ENCODE measurements at regions of chr10 and their contacts with region 1.

Region 1: DNA sequence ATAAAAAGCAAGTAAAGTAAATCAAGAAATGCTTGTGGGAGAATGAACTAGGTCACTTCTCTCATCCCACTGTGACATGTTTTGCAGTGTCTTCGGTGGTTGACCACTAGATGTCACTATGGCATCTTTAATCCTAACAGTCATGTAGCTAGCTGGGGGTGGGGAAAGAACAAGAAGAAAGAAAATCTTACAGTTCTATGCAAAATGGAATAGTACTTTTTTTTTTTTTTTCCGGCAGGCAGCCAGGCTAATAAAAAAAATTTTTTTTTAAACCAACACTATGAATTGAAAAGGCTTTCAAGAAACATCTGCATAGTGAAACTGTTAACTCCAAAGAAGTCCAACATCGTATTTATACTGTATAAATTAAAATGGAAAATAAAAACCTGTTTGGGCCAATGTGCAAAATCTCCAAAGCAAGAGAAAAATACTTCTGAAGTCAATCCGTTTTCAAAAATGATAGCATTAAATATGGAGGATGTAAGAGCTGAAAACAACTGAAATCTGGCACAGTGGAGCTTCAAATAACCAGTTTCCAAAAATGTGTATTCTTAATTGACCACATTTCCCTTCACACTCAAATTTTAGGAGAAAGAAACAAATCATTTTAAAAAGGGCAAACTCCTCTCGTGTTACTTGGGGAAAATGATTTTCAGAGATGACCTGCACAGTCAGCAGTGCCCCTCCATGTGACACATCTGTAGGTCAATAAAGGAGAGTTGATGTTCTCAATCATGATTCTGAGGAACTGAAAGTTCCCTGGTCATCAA is 38.5 kb downstream of the CDK1 start:
- DNase-seq: peak; percentile 32 to 94
- H3K4me3 ChIP-seq: peak overlapping the region in 1 of 4 donors; percentile 8
- H3K27ac ChIP-seq: peak overlapping the region in 3 of 5 donors; percentile 37 to 64 (median 59)
- H3K4me1 ChIP-seq: peaks cover 0 to 29% (median 16%) of the 10 kb centered on the region in 4 donors
- H3K27me3 ChIP-seq: no peaks in the 10 kb centered on the region
- CTCF ChIP-seq: peak in 5 of 7 experiments; percentile 52 to 80 (median 63)
- EP300 ChIP-seq: no peak
- POLR2A ChIP-seq: no peak

Region 2: GRCh38 chr10:60594476-60595051 is 222.2 kb before region 1 on chr10:
- intact Hi-C with region 1: no loop called
- DNase-seq: no peak
- H3K4me3 ChIP-seq: no peak overlapping the region
- H3K27ac ChIP-seq: no peak overlapping the region
- H3K4me1 ChIP-seq: peaks cover 0 to 5% (median 0%) of the 10 kb centered on the region in 4 donors
- H3K27me3 ChIP-seq: no peaks in the 10 kb centered on the region
- CTCF ChIP-seq: no peak
- EP300 ChIP-seq: no peak
- POLR2A ChIP-seq: no peak

Region 3: GRCh38 chr10:60964257-60965235 is 147.7 kb after region 1 on chr10:
- intact Hi-C with region 1: loop called (anchors 10 kb)
- DNase-seq: peak; percentile 65 to 92
- H3K4me3 ChIP-seq: no peak overlapping the region
- H3K27ac ChIP-seq: peak overlapping the region in 4 of 5 donors; percentile 52 to 83 (median 74)
- H3K4me1 ChIP-seq: peaks cover 0 to 49% (median 24%) of the 10 kb centered on the region in 4 donors
- H3K27me3 ChIP-seq: no peaks in the 10 kb centered on the region
- CTCF ChIP-seq: peak in 5 of 7 experiments; percentile 53 to 81 (median 63)
- EP300 ChIP-seq: no peak
- POLR2A ChIP-seq: no peak

Region 4: DNA sequence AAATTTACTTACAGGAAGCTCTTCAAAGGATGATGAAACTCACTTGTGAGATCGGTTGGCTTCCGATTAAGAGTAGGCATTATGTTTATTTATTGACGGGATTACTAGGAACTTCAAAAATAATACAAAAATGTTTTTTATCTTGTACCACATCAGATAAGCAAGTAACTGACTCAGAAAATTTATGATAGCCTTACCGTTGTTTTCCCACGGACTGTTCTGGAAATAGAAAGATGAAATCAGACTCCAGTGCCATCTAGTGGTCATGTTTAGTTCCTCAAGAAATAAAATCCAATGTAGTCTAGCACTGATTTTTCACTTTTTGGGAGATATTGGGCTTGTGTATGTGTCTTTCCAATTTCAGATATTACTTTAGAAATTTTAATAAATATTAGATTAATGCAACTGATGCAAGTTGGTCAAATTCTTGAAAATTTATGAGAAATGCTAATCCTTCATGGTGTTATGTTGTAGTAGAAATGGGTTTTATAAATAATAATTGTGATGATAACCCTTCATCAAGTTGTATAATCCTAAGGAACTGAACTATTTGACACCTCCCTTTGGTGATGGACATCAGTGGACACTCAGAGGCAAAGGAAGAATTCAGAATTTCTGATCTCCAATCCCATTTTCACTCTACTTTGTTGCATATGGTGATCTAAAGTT is 467.5 kb after region 1 on chr10:
- intact Hi-C with region 1: loop called (anchors 5 kb)
- DNase-seq: peak in 1 of 2 donors; percentile 84
- H3K4me3 ChIP-seq: no peak overlapping the region
- H3K27ac ChIP-seq: no peak overlapping the region
- H3K4me1 ChIP-seq: peaks cover 0 to 25% (median 10%) of the 10 kb centered on the region in 4 donors
- H3K27me3 ChIP-seq: no peaks in the 10 kb centered on the region
- CTCF ChIP-seq: peak in 5 of 7 experiments; percentile 44 to 77 (median 69)
- EP300 ChIP-seq: no peak
- POLR2A ChIP-seq: no peak